ENCODE measurements at regions of chr4 and their contacts with region 1.

Region 1: DNA sequence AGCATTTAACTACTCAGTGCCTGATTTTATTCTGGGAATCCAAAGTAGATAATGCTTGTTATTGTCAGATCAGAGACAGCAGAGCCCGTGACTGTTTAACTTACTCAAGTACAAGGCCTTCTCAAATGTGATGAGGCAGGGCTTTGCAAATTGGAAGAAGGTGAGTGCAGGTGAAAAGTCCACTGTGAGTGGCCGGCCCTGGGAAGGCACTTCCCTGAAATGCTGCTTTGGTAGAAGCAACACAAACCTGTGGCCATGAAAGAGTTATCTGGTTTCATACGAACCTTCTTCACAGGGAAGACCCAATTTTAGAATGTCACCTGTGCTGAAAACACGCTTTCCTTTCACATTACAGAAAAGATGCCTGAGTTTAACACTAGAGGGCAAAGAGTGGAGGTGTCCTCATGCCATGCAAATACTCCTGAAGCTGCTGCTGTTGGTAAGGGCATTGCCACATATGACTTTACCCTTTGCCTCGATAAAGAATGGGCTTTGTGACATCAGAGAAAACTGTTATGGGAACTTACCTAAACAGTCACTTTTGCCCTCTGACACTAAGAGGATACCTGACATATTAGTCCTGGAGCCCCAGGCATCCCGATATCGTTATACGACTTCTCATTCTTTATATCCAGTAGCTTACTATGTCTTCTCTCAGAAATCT is 8.0 kb downstream of the PPARGC1A start:
- DNase-seq: no peak
- H3K4me3 ChIP-seq: no peak overlapping the region
- H3K27ac ChIP-seq: peak overlapping the region in 1 of 2 donors; percentile 5
- H3K4me1 ChIP-seq: no peaks in the 10 kb centered on the region
- H3K27me3 ChIP-seq: no peaks in the 10 kb centered on the region
- CTCF ChIP-seq: no peak
- POLR2A ChIP-seq: no peak

Region 2: GRCh38 chr4:23737571-23737970 is 144.2 kb before region 1 on chr4:
- intact Hi-C with region 1: no loop called
- DNase-seq: no peak
- H3K4me3 ChIP-seq: no peak overlapping the region
- H3K27ac ChIP-seq: no peak overlapping the region
- H3K4me1 ChIP-seq: no peaks in the 10 kb centered on the region
- H3K27me3 ChIP-seq: no peaks in the 10 kb centered on the region
- CTCF ChIP-seq: no peak
- POLR2A ChIP-seq: no peak

Region 3: GRCh38 chr4:23909671-23910070 is 27.9 kb after region 1 on chr4:
- intact Hi-C with region 1: loop called (anchors 1 kb)
- DNase-seq: no peak
- H3K4me3 ChIP-seq: no peak overlapping the region
- H3K27ac ChIP-seq: no peak overlapping the region
- H3K4me1 ChIP-seq: no peaks in the 10 kb centered on the region
- H3K27me3 ChIP-seq: no peaks in the 10 kb centered on the region
- CTCF ChIP-seq: no peak
- POLR2A ChIP-seq: no peak

Region 4: DNA sequence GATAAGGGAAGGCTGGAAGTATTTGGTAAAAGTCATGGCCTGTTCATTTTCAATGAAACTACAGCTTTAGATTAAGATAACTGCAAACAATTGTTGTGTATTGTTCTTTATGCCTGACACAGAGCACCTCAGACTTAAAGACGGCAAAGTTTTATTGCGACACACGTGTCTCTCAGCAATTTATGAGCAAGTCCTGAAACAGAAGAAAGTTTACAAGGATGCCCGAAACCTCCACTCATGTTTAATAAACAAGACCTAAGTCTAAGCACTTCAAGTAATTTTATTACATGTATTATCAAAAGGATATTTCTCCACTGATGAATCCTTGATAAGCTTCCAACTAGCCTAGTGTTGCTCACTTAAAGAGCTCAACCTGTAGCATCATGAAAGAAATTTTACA is 651.6 kb after region 1 on chr4:
- intact Hi-C with region 1: loop called (anchors 5 kb)
- DNase-seq: no peak
- H3K4me3 ChIP-seq: no peak overlapping the region
- H3K27ac ChIP-seq: no peak overlapping the region
- H3K4me1 ChIP-seq: no peaks in the 10 kb centered on the region
- H3K27me3 ChIP-seq: no peaks in the 10 kb centered on the region
- CTCF ChIP-seq: no peak
- POLR2A ChIP-seq: no peak